ENCODE measurements at regions of chr17 and their contacts with region 1.

Region 1: DNA sequence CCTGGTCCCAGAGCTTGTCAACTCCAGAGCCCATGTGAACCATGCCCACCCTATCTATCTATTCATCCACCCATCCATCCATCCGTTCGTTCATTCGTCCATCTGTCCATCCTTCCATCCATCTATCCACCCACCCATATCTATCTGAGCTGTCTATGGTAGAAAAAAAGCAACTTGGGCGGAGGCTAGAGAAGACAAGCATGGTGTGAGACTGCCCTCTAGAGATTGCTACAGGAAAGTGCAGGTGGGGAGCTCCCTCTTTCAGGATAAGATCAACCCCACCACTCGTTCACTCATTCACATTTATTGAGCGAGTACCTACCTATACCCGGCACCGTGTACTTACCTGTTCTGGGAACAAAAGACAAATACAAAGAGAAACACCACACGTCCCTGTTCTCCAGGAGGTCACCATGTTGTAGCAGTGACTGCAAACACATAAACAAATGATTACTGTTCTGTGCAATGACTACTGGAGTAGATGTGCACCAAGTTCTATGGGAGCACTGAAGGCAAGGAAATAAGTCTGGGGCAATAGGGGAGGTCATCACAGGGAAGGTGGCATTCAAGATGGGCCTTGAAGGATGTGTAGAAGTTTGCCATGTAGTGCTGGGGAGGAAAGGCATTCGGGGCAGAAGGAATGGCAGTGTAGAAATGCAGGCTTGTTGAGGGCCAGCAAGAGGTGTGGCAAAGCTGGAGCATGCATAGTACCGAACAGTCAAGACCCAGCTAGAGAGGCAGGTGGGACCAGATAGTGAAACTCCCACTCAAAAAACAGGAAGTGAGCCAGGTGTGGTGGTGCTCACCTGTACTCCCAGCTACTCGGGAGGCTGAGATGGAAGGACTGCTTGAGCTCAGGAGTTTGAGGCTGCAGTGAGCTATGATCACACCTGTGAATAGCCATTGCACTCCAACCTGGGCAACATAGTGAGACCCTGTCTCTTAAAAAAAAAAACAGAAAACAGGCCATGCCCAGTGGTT is 13.4 kb upstream of the ATP5MC1 start:
- H3K4me3 ChIP-seq: no peak overlapping the region
- H3K27ac ChIP-seq: no peak overlapping the region
- H3K4me1 ChIP-seq: no peaks in the 10 kb centered on the region
- CTCF ChIP-seq: peak; percentile 94

Region 2: DNA sequence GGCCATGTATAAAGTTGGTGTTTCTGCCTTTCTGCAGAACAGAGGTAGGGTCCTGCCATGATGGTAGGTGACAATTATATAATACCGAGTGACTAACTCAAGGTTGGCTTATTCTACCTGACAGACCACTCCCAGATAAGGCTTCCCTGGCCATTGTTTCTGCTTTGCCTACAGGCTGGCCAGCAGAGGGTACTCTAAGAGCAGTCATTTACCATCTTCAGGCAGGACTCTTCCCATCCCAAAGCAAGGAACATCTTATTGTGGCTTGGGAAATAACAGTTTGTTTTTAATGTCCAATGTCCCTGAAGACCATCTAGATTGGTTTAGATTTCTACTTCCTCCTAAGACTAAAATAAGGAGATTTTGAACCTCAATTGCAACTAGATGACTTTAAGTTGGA is 697.6 kb before region 1 on chr17:
- CTCF ChIA-PET with region 1: no interaction called
- POLR2A ChIA-PET with region 1: no interaction called
- H3K4me3 ChIP-seq: no peak overlapping the region
- H3K27ac ChIP-seq: no peak overlapping the region
- H3K4me1 ChIP-seq: no peaks in the 10 kb centered on the region
- CTCF ChIP-seq: peak; percentile 75

Region 3: DNA sequence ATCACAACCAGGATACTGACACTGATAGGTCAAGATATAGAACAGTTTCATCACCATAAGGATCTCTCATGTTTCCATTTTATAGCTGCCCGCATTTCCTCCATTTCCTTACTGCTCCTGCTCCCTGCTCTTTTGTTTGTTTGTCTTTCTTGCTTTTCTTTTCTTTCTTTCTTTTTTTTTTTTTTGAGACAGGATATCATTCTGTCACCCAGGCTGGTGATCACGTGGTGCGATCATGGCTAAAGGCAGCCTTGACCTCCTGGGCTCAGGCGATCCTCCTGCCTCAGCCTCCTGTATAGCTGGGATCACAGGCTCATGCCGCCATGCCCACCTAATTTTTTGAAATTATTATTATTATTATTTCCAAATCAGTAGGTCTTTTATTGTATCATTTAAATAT is 188.6 kb before region 1 on chr17:
- CTCF ChIA-PET with region 1: interaction called, 14 read pairs
- POLR2A ChIA-PET with region 1: no interaction called
- H3K4me3 ChIP-seq: no peak overlapping the region
- H3K27ac ChIP-seq: no peak overlapping the region
- H3K4me1 ChIP-seq: no peaks in the 10 kb centered on the region
- CTCF ChIP-seq: no peak

Region 4: DNA sequence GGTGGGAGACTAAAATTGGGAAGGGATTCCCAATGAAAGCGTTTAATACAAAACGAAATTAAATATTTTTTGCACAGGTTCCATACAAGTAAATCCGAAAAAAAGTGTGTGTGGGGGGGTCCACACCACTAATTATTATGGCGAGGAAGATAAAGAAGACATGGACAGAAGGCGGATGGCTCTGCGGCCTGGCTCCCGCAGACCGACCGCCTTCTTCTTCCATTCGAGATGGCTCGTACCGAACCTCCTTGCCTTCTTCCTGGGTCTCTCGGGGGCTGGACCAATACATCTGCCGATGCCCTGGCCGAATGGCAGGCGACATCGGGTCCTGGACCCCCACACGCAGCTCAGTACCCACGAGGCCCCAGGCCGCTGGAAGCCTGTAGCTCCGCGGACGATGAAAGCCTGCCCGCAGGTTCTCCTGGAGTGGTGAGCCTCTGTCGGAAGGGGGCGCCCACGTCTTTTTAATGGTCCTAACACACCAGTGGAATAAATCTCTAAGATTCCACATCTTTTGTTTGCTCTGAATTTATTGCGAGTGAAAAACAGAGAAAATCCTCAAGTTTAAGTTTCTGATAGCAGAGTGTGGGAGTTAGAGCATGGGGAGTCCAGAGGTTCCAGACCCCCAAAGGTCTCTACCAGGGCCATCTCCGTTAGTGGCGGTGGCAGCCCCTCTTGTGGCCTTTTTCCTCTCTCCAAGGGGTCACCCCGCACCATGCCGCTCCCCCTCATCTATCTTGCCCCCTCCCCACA is 154.8 kb before region 1 on chr17:
- CTCF ChIA-PET with region 1: interaction called, 66 read pairs
- POLR2A ChIA-PET with region 1: interaction called, 10 read pairs
- H3K4me3 ChIP-seq: no peak overlapping the region
- H3K27ac ChIP-seq: no peak overlapping the region
- H3K4me1 ChIP-seq: peaks cover 3% of the 10 kb centered on the region
- CTCF ChIP-seq: peak; percentile 56

Region 5: DNA sequence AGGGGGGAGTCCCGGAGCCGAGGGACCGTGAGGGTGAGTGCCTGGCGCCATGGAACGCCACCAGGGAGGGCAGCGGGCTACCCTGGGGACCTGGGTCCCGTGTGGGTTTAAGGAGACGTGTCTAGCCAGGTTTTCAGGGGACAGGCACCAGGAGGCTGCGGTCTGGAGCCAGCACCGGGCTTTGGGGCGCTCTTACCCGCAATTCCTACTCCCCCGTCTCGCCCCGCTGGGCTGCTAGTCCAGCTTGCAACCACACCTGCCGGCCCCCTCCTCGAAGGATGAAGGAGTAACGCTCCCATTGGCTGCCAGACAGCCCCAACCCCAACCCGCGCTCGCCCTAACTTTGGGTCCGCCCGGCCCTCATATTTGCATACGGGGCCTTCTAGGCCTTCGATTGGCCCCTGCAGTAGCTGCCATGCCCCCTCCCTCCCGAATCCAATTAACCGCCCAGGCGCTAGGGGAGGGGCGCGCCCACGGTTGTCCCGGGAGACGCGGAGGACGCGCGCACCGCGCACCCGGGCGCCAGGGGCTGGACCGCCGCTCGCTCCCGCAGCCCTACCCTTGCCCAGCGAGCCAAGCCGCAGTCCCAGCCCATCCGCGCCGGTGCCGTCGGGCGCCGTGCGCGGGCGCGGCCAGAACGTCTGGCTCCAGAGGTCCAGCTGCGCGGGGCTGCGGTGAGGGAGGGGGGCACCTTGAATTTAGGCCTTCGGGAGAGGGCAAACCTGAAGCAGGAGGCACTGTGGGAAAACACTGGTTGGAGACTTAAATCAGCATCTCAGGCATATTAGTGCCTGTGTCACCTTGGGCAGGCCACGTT is 62.2 kb before region 1 on chr17 and contains the start of gene TTLL6:
- CTCF ChIA-PET with region 1: interaction called, 387 read pairs
- POLR2A ChIA-PET with region 1: interaction called, 9 read pairs
- H3K4me3 ChIP-seq: peak within 1 kb of the TSS; percentile 43
- H3K27ac ChIP-seq: no peak within 1 kb of the TSS; the same call in 1 of the 2 replicates
- H3K4me1 ChIP-seq: peaks cover 4% of the 10 kb centered on the region
- CTCF ChIP-seq: peak; percentile 44; the same call in 1 of the 2 replicates

Region 6: GRCh38 chr17:48841395-48841831 is 37.8 kb before region 1 on chr17:
- CTCF ChIA-PET with region 1: interaction called, 26 read pairs
- POLR2A ChIA-PET with region 1: no interaction called
- H3K4me3 ChIP-seq: no peak overlapping the region
- H3K27ac ChIP-seq: no peak overlapping the region
- H3K4me1 ChIP-seq: peaks cover 4% of the 10 kb centered on the region; the same call in 1 of the 2 replicates
- CTCF ChIP-seq: no peak

Region 7: GRCh38 chr17:48892940-48893645 is 13.9 kb after region 1 on chr17:
- CTCF ChIA-PET with region 1: interaction called, 21 read pairs
- POLR2A ChIA-PET with region 1: interaction called, 6 read pairs
- H3K4me3 ChIP-seq: peak overlapping the region; percentile 83
- H3K27ac ChIP-seq: peak overlapping the region; percentile 54; the same call in 1 of the 2 replicates
- H3K4me1 ChIP-seq: 0 out of 2 replicates have a peak, but pooled peaks cover 3% of the 10 kb centered on the region
- CTCF ChIP-seq: peak; percentile 39; the same call in 1 of the 2 replicates

Region 8: DNA sequence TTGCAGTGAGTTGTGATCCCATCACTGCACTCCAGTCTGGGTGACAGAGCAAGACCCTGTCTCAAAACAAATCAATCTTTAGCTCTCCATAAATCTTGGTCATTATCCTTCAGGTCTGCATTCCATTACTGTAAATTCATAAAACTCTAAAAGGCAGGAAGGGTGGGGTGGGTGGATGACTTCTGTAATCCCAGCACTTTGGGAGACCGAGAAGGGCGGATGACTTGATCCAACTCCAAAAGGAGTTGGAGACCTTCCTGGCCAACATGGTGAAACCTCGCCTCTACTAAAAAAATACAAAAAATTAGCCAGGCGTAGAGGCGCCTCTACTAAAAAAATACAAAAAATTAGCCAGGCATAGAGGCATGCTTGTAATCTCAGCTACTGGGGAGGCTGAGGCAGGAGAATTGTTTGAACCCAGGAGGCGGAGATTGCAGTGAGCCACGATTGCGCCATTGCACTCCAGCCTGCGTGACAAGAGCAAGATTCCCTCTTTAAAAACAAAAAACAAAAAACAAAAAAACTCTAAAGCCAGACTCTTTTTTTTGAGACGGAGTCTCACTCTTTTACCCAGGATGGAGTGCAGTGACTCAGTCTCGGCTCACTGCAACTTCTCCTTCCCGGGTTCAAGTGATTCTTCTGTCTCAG is 26.9 kb after region 1 on chr17:
- CTCF ChIA-PET with region 1: no interaction called
- POLR2A ChIA-PET with region 1: no interaction called
- H3K4me3 ChIP-seq: no peak overlapping the region
- H3K27ac ChIP-seq: no peak overlapping the region
- H3K4me1 ChIP-seq: peaks cover 16% of the 10 kb centered on the region
- CTCF ChIP-seq: no peak

Region 9: GRCh38 chr17:48961516-48962233 is 82.5 kb after region 1 on chr17:
- CTCF ChIA-PET with region 1: no interaction called
- POLR2A ChIA-PET with region 1: no interaction called
- H3K4me3 ChIP-seq: no peak overlapping the region
- H3K27ac ChIP-seq: no peak overlapping the region
- H3K4me1 ChIP-seq: no peaks in the 10 kb centered on the region; the same call in 1 of the 2 replicates
- CTCF ChIP-seq: no peak

Measured in HEK293 (cell line).